AG04450 (cell line): ENCODE measurements at regions of chr13 and their contacts with region 1.

Region 1: DNA sequence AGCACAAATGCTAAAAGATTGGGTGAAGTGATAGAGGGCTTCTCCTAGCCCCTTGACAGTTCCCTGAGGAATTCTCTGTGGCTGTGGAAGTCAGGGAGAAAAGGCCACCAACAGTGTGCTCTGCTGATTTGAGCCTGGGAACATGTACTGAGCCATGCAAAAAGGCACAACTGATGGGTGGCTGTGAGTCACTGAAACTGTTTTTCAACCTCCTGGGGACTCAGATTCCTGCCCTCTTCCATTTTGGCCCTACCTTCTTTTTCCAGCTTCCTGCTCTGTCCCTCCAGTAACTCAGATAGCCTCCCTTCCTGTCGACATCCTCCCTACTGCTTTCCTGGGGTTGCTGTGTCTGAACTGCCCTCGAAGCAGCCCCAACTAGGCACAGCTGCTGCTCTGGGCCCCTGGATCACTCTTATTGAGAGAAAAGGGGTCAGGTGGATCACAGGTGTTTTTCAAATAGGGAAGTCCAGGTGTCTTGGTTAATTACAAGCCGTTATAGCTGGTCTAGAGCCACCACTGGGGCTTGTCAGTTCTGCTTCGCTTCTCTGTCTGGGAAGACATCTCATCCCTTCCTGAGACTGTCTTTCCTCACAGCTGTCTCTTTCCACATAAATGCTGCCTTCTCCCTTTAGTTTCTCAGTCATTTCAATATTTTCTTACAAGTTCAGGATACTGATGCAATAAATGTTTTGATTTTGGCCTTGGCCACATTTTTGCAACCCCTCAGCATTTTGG is 13.7 kb downstream of the FAM124A start:
- DNase-seq: no peak
- H3K4me3 ChIP-seq: no peak overlapping the region
- H3K27ac ChIP-seq: no peak overlapping the region
- H3K27me3 ChIP-seq: peaks cover 12% of the 10 kb centered on the region
- CTCF ChIP-seq: no peak

Region 2: DNA sequence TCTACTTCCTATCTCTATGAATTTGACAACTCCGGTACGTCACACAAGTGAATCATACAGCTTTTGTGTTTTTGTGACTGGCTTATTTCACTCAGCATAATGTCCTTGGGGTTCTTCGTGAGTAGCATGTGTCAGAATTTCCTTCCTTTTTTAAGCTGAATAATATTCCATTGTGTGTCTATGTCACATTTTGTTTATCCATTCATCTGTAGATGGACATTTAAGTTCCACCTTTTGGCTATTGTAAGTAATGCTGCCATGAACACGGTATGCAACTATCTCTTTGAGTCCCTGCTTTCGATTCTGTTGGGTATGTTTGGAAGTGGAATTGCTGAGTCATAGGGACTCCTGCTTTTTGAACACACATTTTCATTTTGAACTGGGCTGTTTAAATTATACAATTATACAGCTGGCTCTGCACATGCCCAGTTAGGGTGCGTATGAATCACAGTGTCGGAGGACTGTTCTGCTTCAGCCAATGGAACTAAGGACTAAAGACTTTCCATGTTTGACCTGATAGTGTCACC is 81.8 kb before region 1 on chr13:
- CTCF ChIA-PET with region 1: interaction called, 12 read pairs
- POLR2A ChIA-PET with region 1: no interaction called
- DNase-seq: no peak
- H3K4me3 ChIP-seq: no peak overlapping the region
- H3K27ac ChIP-seq: no peak overlapping the region
- H3K27me3 ChIP-seq: peaks cover 10% of the 10 kb centered on the region
- CTCF ChIP-seq: no peak